ENCODE measurements at regions of chr2 and their contacts with region 1.

Region 1: GRCh38 chr2:42095923-42096408 is 48.1 kb downstream of the PKDCC start:
- DNase-seq: peak; percentile 62 to 82 (median 66)
- H3K4me3 ChIP-seq: no peak overlapping the region
- H3K4me3 Mint-ChIP-seq: no peak overlapping the region
- H3K27ac ChIP-seq: no peak overlapping the region
- H3K27ac Mint-ChIP-seq: peak overlapping the region in 6 of 8 donors; percentile 41 to 86 (median 68)
- H3K4me1 ChIP-seq: peaks cover 33% of the 10 kb centered on the region
- H3K4me1 Mint-ChIP-seq: peaks cover 46 to 62% (median 49%) of the 10 kb centered on the region in 3 donors
- H3K27me3 ChIP-seq: no peaks in the 10 kb centered on the region
- H3K27me3 Mint-ChIP-seq: no peaks in the 10 kb centered on the region

Region 2: GRCh38 chr2:42132966-42133641 is 37.1 kb after region 1 on chr2:
- CTCF ChIA-PET with region 1: interaction called, 63 read pairs
- POLR2A ChIA-PET with region 1: interaction called, 13 read pairs
- DNase-seq: peak; percentile 85 to 97 (median 91)
- H3K4me3 ChIP-seq: peak overlapping the region; percentile 55
- H3K4me3 Mint-ChIP-seq: peak overlapping the region; percentile 24 to 80 (median 77)
- H3K27ac ChIP-seq: peak overlapping the region; percentile 78
- H3K27ac Mint-ChIP-seq: peak overlapping the region; percentile 76 to 100 (median 100)
- H3K4me1 ChIP-seq: peaks cover 85% of the 10 kb centered on the region
- H3K4me1 Mint-ChIP-seq: peaks cover 84 to 96% (median 95%) of the 10 kb centered on the region in 3 donors
- H3K27me3 ChIP-seq: no peaks in the 10 kb centered on the region
- H3K27me3 Mint-ChIP-seq: no peaks in the 10 kb centered on the region

Region 3: GRCh38 chr2:42169100-42169873 is 73.3 kb after region 1 on chr2 and contains the start of gene EML4:
- CTCF ChIA-PET with region 1: interaction called, 34 read pairs
- POLR2A ChIA-PET with region 1: no interaction called
- DNase-seq: peak; percentile 83 to 92 (median 89)
- H3K4me3 ChIP-seq: peak within 1 kb of the TSS; percentile 87
- H3K4me3 Mint-ChIP-seq: peak within 1 kb of the TSS in 2 of 7 donors; percentile 33 to 41
- H3K27ac ChIP-seq: peak within 1 kb of the TSS; percentile 84
- H3K27ac Mint-ChIP-seq: peak within 1 kb of the TSS in 6 of 8 donors; percentile 83 to 92 (median 90)
- H3K4me1 ChIP-seq: peaks cover 23% of the 10 kb centered on the region
- H3K4me1 Mint-ChIP-seq: peaks cover 11 to 33% (median 19%) of the 10 kb centered on the region in 3 donors
- H3K27me3 ChIP-seq: no peaks in the 10 kb centered on the region
- H3K27me3 Mint-ChIP-seq: no peaks in the 10 kb centered on the region
- total RNA-seq, gene EML4: 58.0 to 61.5 TPM

Region 4: GRCh38 chr2:42196403-42197267 is 100.7 kb after region 1 on chr2:
- CTCF ChIA-PET with region 1: interaction called, 55 read pairs
- POLR2A ChIA-PET with region 1: interaction called, 3 read pairs
- DNase-seq: peak in 3 of 5 donors; percentile 48 to 65 (median 61)
- H3K4me3 ChIP-seq: no peak overlapping the region
- H3K4me3 Mint-ChIP-seq: peak overlapping the region in 2 of 7 donors; percentile 21 to 60
- H3K27ac ChIP-seq: no peak overlapping the region
- H3K27ac Mint-ChIP-seq: peak overlapping the region in 7 of 8 donors; percentile 2 to 90 (median 49)
- H3K4me1 ChIP-seq: peaks cover 78% of the 10 kb centered on the region
- H3K4me1 Mint-ChIP-seq: peaks cover 70 to 96% (median 94%) of the 10 kb centered on the region in 3 donors
- H3K27me3 ChIP-seq: no peaks in the 10 kb centered on the region
- H3K27me3 Mint-ChIP-seq: no peaks in the 10 kb centered on the region

Region 5: DNA sequence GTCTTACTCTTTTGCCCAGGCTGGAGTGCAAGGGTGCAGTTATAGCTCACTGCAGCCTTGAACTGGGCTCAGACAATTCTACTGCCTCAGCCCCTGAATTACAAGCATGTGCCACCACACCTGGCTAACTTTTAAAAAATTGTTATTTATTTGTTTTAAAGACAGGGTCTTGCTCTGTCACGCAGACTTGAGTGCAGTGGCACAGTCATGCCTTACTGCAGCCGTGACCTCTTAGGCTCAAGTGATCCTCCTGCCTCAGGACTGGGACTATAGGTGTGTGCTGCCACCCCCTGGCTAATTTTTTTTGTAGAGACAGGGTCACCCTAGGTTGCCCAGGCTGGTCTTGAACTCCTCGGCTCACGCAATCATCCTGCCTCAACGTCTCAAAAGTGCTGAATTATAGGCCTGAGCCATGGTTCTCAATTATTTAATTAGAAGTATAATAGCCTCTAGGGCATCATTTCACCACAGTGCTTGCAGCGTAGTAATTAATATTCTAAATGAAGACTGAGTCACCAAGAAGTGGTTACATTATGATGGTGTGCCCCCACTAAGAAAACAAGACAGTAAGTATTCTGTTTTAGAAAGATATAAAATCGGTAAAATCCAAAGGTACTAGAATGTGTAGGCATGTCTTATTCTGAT is 142.8 kb after region 1 on chr2:
- CTCF ChIA-PET with region 1: interaction called, 45 read pairs
- POLR2A ChIA-PET with region 1: no interaction called
- DNase-seq: peak in 4 of 5 donors; percentile 22 to 60 (median 30)
- H3K4me3 ChIP-seq: no peak overlapping the region
- H3K4me3 Mint-ChIP-seq: peak overlapping the region in 2 of 7 donors; percentile 23 to 26
- H3K27ac ChIP-seq: no peak overlapping the region
- H3K27ac Mint-ChIP-seq: peak overlapping the region in 3 of 8 donors; percentile 32 to 51 (median 33)
- H3K4me1 ChIP-seq: peaks cover 55% of the 10 kb centered on the region
- H3K4me1 Mint-ChIP-seq: peaks cover 81 to 99% (median 95%) of the 10 kb centered on the region in 3 donors
- H3K27me3 ChIP-seq: no peaks in the 10 kb centered on the region
- H3K27me3 Mint-ChIP-seq: no peaks in the 10 kb centered on the region

Region 6: DNA sequence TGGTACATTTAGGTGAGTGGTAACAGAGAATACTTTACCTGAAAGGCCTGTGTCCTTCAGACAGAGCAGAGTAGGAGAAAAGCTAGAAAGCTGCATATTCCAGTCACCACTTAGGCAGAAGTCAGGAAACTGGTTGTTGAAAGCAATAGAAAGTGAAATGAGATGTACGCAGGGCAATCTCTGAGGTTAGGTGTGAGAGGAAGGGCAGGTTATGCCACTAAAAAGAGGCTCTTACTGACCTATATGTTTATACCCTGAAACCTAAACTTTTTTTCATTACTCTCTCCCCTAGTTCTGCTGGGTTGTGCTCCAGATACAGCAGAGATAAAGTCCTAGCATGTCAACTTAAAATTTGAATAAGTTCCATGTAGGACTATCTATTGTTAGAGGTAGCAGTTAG is 171.6 kb after region 1 on chr2:
- CTCF ChIA-PET with region 1: interaction called, 10 read pairs
- POLR2A ChIA-PET with region 1: no interaction called
- DNase-seq: no peak
- H3K4me3 ChIP-seq: no peak overlapping the region
- H3K4me3 Mint-ChIP-seq: peak overlapping the region in 1 of 7 donors; percentile 30
- H3K27ac ChIP-seq: no peak overlapping the region
- H3K27ac Mint-ChIP-seq: peak overlapping the region in 4 of 8 donors; percentile 20 to 78 (median 52)
- H3K4me1 ChIP-seq: peaks cover 11% of the 10 kb centered on the region
- H3K4me1 Mint-ChIP-seq: peaks cover 22 to 34% (median 24%) of the 10 kb centered on the region in 3 donors
- H3K27me3 ChIP-seq: no peaks in the 10 kb centered on the region
- H3K27me3 Mint-ChIP-seq: peaks cover 0 to 2% of the 10 kb centered on the region in 2 donors

Region 7: DNA sequence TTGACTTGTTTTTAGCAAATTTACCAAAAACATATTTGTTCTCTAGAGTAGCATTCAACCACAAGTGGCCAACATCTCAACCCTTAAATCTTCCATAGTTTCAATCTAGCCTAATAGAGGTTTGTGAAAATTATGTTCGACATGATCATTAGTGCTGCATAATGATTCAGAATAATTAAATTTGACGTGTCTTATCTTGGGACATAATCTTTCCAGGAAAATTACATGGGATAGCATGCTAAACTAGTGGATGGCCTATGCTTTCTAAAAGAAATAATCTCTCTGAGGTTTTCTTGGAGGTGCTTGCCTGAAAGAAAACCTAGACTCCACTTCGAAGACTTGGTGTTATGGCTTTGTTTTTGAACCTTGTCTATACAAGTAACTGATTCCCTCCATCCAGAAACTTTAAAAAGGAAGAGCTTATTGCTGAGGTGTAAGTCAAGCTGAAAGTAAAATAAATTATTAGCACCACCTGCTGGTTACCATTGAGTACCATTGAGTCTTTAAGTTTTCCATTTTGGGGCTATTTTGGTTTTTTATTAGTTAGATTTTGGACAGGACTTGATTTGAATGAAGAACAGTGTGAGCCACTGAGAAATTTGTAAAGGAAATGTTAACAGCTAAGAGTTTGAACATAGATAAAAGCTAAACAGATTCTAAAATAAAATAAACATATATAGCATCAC is 232.3 kb after region 1 on chr2:
- CTCF ChIA-PET with region 1: interaction called, 14 read pairs
- POLR2A ChIA-PET with region 1: no interaction called
- DNase-seq: peak in 2 of 5 donors; percentile 16 to 18
- H3K4me3 ChIP-seq: no peak overlapping the region
- H3K4me3 Mint-ChIP-seq: no peak overlapping the region
- H3K27ac ChIP-seq: no peak overlapping the region
- H3K27ac Mint-ChIP-seq: peak overlapping the region; percentile 7 to 84 (median 64)
- H3K4me1 ChIP-seq: no peaks in the 10 kb centered on the region
- H3K4me1 Mint-ChIP-seq: peaks cover 6 to 20% (median 6%) of the 10 kb centered on the region in 3 donors
- H3K27me3 ChIP-seq: no peaks in the 10 kb centered on the region
- H3K27me3 Mint-ChIP-seq: no peaks in the 10 kb centered on the region

Measured in CD8-positive, alpha-beta memory T cell (primary cell).